GM10248 (cell line): ENCODE measurements at regions of chr7 and their contacts with region 1.

Region 1: DNA sequence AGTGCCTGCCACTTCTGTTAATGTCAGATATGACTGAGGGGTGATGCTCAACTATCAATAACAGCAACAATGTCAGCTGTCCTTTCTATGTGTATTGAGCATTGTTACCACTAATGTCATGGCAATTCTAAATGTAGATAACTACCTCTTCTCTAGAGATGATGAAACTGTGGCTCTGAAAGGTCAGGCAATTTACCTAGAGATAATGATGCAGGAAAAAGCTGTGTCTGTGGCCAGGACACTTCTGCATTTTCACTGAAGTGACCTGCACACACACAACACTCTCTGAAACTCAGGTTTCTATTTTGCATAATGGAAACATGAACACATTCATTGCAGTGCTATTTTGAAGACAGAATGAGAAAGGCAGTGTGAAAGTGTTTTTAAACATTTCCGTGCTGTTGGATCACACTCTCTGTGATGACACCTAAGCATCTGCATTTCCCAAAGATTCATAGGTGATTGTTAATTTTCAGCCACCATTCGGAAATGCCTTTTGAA is 148.2 kb downstream of the KCND2 start:
- DNase-seq: peak; percentile 64
- CTCF ChIP-seq: no peak

Region 2: DNA sequence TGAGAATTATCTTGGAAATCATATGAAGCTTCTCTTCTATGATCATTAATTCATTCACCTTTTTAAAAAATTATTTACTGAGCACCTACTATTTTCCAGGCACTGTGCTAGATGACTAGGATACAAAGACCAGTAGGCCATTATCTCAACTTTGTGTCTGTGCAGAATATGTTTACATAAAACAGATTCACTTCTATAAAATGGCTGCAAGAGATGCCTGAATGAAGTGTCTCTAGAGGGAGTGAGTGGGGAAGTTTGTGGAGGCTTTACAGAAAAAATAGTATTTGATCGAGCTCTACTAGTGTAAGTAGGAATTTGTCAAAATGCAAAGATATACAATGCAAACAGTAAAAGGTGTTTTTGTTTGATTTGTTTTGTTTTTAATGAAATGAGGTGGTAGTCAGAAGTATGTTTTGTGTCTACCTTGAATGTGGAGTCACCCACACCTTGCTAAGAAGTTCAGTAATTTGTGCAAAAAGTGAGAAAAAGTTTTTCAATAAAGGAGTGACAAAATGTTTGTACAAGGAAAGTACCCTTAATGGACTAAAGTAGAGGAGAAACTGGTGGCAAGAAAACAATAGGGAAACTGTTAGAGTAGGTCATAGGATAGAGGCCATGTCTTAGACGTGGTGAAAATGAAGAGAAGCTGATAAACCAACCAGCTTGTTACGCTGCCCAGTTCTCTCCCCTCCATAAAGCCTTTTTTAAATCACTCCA is 22.8 kb before region 1 on chr7:
- CTCF ChIA-PET with region 1: interaction called, 11 read pairs
- POLR2A ChIA-PET with region 1: interaction called, 7 read pairs
- DNase-seq: no peak
- CTCF ChIP-seq: peak; percentile 8

Region 3: GRCh38 chr7:120404042-120404441 is 17.2 kb before region 1 on chr7:
- CTCF ChIA-PET with region 1: interaction called, 25 read pairs
- POLR2A ChIA-PET with region 1: interaction called, 11 read pairs
- DNase-seq: no peak
- CTCF ChIP-seq: no peak

Region 4: GRCh38 chr7:120436487-120437060 is 15.4 kb after region 1 on chr7:
- CTCF ChIA-PET with region 1: interaction called, 13 read pairs
- POLR2A ChIA-PET with region 1: no interaction called
- DNase-seq: no peak
- CTCF ChIP-seq: no peak